Prostate gland (tissue), 2 donors: ENCODE measurements at regions of chr11 and their contacts with region 1.

Region 1: GRCh38 chr11:118488480-118489109 is 38.7 kb upstream of the TTC36 start:
- DNase-seq: peak; percentile 54
- H3K4me3 ChIP-seq: no peak overlapping the region
- H3K27ac ChIP-seq: no peak overlapping the region
- H3K4me1 ChIP-seq: no peaks in the 10 kb centered on the region
- H3K27me3 ChIP-seq: no peaks in the 10 kb centered on the region
- CTCF ChIP-seq: peak; percentile 68 to 81 (median 76)
- POLR2A ChIP-seq: no peak

Region 2: GRCh38 chr11:117876341-117877119 is 612.1 kb before region 1 on chr11 and contains the start of gene FXYD6:
- intact Hi-C with region 1: no loop called
- DNase-seq: no peak
- H3K4me3 ChIP-seq: peak within 1 kb of the TSS; percentile 45
- H3K27ac ChIP-seq: peak within 1 kb of the TSS; percentile 69 to 71
- H3K4me1 ChIP-seq: no peaks in the 10 kb centered on the region
- H3K27me3 ChIP-seq: no peaks in the 10 kb centered on the region
- CTCF ChIP-seq: no peak
- POLR2A ChIP-seq: no peak
- total RNA-seq, gene FXYD6: 29.6 to 366 TPM

Region 3: DNA sequence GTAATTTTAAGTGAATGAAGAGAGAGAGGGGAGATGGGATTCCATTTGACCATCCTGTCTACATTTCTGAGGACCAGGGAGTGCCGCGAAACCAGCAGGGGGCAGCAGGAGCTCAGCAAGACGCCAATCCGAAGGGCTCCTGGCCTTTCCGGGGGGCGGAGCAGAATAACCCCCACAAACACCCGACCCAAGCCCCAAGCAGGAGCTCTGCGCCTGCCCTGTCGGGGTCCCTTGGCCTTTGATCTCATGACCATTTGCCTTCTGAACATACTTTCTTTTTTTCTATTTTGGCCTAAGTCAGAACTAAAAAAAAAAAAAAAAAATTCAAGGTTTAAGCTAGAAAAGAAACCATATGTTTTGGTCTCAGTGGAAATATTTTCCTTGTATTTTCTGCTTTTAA is 290.2 kb before region 1 on chr11:
- intact Hi-C with region 1: loop called (anchors 5 kb)
- DNase-seq: peak; percentile 66
- H3K4me3 ChIP-seq: no peak overlapping the region
- H3K27ac ChIP-seq: no peak overlapping the region
- H3K4me1 ChIP-seq: no peaks in the 10 kb centered on the region
- H3K27me3 ChIP-seq: no peaks in the 10 kb centered on the region
- CTCF ChIP-seq: peak; percentile 77 to 88 (median 86)
- POLR2A ChIP-seq: no peak

Region 4: GRCh38 chr11:118401151-118401878 is 87.3 kb before region 1 on chr11 and contains the start of gene ATP5MG:
- intact Hi-C with region 1: loop called (anchors 2 kb)
- DNase-seq: peak; percentile 81
- H3K4me3 ChIP-seq: peak within 1 kb of the TSS; percentile 65 to 83
- H3K27ac ChIP-seq: peak within 1 kb of the TSS; percentile 85 to 88
- H3K4me1 ChIP-seq: peaks cover 8% of the 10 kb centered on the region
- H3K27me3 ChIP-seq: no peaks in the 10 kb centered on the region
- CTCF ChIP-seq: no peak
- POLR2A ChIP-seq: peak; percentile 5
- total RNA-seq, gene ATP5MG: 32.9 to 66.4 TPM

Region 5: GRCh38 chr11:118435893-118436624 is 52.5 kb before region 1 on chr11 and contains the start of gene KMT2A:
- intact Hi-C with region 1: loop called (anchors 5 kb)
- DNase-seq: peak; percentile 97
- H3K4me3 ChIP-seq: peak within 1 kb of the TSS; percentile 97
- H3K27ac ChIP-seq: peak within 1 kb of the TSS; percentile 96 to 97
- H3K4me1 ChIP-seq: peaks cover 5% of the 10 kb centered on the region
- H3K27me3 ChIP-seq: no peaks in the 10 kb centered on the region
- CTCF ChIP-seq: peak in 2 of 4 experiments; percentile 87 to 98
- POLR2A ChIP-seq: peak; percentile 42
- total RNA-seq, gene KMT2A: 82.6 to 89.0 TPM

Region 6: GRCh38 chr11:118851970-118852369 is 363.4 kb after region 1 on chr11:
- intact Hi-C with region 1: no loop called
- DNase-seq: no peak
- H3K4me3 ChIP-seq: no peak overlapping the region
- H3K27ac ChIP-seq: no peak overlapping the region
- H3K4me1 ChIP-seq: no peaks in the 10 kb centered on the region
- H3K27me3 ChIP-seq: no peaks in the 10 kb centered on the region
- CTCF ChIP-seq: no peak
- POLR2A ChIP-seq: no peak